Dendritic cell treated with granulocyte-macrophage colony-stimulating factor and Interleukin-4, amounts not matched to agents 40 ng/mL and 50 ng/mL, for 4 days (primary cell): ENCODE measurements at regions of chr6 and their contacts with region 1.

Region 1: DNA sequence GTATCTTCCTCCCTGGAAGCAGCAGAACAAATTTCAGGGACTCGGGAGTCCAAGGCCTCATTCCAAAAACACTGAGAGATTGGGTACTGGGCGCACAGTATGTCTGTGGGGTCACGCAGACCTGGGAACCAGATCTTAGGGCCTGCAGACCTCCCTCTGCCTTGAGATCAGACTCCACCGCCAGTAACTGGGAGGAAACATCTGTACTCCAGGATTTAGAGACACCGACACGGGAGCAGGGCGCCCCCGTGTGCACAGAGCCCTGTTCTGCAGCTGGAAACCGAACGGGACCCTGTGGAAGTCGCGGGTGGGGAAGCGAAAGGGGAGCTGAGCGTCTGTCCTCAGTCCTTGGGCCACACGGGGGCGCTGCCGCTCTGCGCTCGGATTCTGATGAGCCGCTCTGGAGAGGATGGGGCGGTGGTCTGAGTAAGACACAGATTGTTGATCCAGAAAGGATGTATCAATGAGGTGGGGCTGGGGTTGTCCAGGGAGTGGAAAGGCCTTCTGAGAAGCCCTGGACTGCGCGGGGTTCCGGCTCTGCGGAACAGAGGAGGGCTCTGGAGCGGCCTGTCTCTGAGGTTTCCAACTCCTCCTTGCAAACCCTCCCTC is 35.7 kb upstream of the HLA-E start:
- H3K4me3 Mint-ChIP-seq: no peak overlapping the region
- H3K27ac Mint-ChIP-seq: no peak overlapping the region
- H3K4me1 Mint-ChIP-seq: peaks cover 45% of the 10 kb centered on the region
- H3K27me3 Mint-ChIP-seq: peaks cover 86% of the 10 kb centered on the region

Region 2: DNA sequence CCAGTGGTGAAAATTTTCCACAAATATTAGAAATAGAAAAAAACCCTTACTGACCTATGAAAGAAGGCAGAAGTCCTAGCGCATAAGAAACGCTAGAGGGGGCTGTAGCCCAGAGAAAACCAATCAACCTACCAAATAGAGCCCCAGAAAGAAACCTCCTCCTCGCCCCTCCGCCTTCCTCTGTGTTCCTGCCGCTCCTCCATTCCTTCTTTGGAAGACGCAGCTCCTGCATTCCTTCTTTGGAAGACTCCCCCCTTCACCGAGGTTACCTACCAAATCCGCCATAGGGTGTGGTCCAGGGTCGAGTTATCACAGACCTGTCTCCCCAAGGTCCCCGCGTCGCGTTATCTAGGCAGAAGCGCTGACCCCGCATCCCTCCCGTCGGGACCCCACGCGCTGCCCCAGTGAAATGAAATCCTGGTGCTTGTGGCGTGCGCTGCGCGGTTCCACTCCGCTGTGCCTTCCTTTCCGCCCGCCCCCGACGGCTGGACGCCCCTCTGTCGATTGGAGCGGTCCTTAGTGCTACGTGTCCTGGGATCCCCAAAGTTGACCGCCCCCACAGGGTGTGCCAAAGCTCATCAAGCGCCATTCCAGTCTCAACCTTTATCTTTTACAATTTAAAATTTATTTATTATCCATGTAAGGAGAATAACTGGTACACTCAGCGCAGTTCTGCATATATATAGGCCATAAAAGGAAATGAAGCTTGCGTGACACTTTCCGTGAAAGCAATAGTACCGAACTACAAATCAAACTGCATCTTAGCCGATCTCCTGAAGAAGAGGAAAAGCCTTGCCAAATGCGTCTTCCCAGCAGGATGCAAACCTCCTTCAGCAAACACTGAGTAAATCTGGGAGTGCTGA is 95.7 kb before region 1 on chr6:
- intact Hi-C with region 1: loop called (anchors 5 kb)
- H3K4me3 Mint-ChIP-seq: peak overlapping the region; percentile 62
- H3K27ac Mint-ChIP-seq: no peak overlapping the region
- H3K4me1 Mint-ChIP-seq: peaks cover 7% of the 10 kb centered on the region
- H3K27me3 Mint-ChIP-seq: peaks cover 78% of the 10 kb centered on the region

Region 3: GRCh38 chr6:30411515-30412207 is 42.0 kb before region 1 on chr6:
- intact Hi-C with region 1: loop called (anchors 1 kb)
- H3K4me3 Mint-ChIP-seq: no peak overlapping the region
- H3K27ac Mint-ChIP-seq: no peak overlapping the region
- H3K4me1 Mint-ChIP-seq: peaks cover 5% of the 10 kb centered on the region
- H3K27me3 Mint-ChIP-seq: peaks cover 90% of the 10 kb centered on the region